Body of pancreas (tissue), 4 donors: ENCODE measurements at regions of chr15 and their contacts with region 1.

Region 1: GRCh38 chr15:83559310-83559966 is 94.5 kb upstream of the ADAMTSL3 start:
- DNase-seq: peak; percentile 61 to 70 (median 64)
- ATAC-seq: peak; percentile 69
- H3K4me3 ChIP-seq: no peak overlapping the region
- H3K27ac ChIP-seq: no peak overlapping the region
- H3K4me1 ChIP-seq: no peaks in the 10 kb centered on the region
- H3K27me3 ChIP-seq: no peaks in the 10 kb centered on the region
- CTCF ChIP-seq: peak; percentile 59 to 85 (median 80)
- POLR2A ChIP-seq: no peak

Region 2: GRCh38 chr15:83250801-83251200 is 308.6 kb before region 1 on chr15:
- intact Hi-C with region 1: loop called (anchors 10 kb)
- DNase-seq: no peak
- ATAC-seq: no peak
- H3K4me3 ChIP-seq: no peak overlapping the region
- H3K27ac ChIP-seq: no peak overlapping the region
- H3K4me1 ChIP-seq: peaks cover 4% of the 10 kb centered on the region
- H3K27me3 ChIP-seq: no peaks in the 10 kb centered on the region
- CTCF ChIP-seq: no peak
- POLR2A ChIP-seq: no peak

Region 3: GRCh38 chr15:83283138-83283812 is 276.2 kb before region 1 on chr15:
- intact Hi-C with region 1: no loop called
- DNase-seq: peak in 1 of 4 donors; percentile 13
- ATAC-seq: peak; percentile 33
- H3K4me3 ChIP-seq: peak overlapping the region in 1 of 2 donors; percentile 9
- H3K27ac ChIP-seq: no peak overlapping the region
- H3K4me1 ChIP-seq: peaks cover 15% of the 10 kb centered on the region
- H3K27me3 ChIP-seq: peaks cover 0 to 29% of the 10 kb centered on the region in 2 donors
- CTCF ChIP-seq: no peak
- POLR2A ChIP-seq: no peak

Region 4: DNA sequence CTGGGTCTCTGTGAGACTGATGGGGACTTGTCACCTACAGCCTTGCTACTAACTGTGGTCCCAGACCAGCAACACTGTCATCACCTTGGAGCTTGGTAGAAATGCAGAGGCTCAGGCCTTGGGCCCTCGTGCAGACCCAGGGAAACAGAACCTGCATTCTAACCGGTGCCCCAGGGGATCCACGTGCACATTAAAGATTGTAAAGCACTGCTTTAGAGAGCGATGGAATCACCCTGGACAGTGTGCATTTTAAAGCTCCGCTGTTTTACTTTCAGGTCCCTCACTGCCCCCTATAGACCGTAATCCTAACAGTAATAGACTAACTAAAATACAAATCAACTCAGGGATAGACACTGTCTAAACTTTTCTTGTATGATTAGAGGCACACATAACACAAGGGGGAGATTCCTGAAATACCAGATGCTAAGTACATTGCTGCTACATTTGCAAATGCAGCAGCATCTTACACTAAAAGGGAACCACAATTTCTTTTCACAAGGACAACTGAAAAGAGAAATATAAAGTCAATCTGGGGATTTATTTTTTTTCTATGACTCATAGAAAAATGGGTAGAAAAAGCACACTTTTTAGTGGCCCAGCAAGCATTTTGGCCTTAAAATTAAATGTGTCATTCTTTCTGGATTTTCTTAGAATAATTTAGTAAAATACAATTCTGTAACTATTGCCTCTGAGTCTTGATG is 122.8 kb before region 1 on chr15:
- intact Hi-C with region 1: loop called (anchors 5 kb)
- DNase-seq: no peak
- ATAC-seq: no peak
- H3K4me3 ChIP-seq: no peak overlapping the region
- H3K27ac ChIP-seq: no peak overlapping the region
- H3K4me1 ChIP-seq: no peaks in the 10 kb centered on the region
- H3K27me3 ChIP-seq: no peaks in the 10 kb centered on the region
- CTCF ChIP-seq: peak in 2 of 7 experiments; percentile 7 to 14
- POLR2A ChIP-seq: no peak